Posterior cingulate gyrus (tissue), 11 donors: ENCODE measurements at regions of chr3 and their contacts with region 1.

Region 1: DNA sequence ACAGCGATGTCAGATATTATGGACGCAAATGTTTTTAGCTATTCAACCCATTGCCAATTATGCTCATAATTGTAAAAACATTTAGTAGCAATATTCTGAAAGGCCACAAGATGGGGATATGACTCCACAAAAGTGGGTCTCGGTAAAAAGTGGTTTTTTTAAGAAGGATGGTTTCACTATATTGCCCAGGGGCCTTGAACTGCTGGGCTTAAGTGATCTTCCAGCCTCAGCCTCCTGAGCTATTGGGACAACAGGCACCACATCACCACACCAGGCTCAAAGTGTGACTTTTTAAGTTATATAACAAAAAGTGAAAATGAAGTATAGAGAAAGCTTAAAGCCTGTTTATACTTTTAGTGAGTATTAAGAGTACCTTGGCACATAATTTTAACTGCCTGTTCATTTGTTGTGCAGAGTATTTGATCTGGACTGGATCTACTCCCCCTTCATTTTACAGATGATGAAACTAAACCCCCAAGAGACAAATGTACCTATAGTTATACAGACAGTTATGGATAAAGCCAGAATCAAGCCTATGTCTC is 9.4 kb downstream of the NAA50 start:
- DNase-seq: no peak

Region 2: GRCh38 chr3:113838631-113839209 is 102.1 kb after region 1 on chr3 and contains the start of gene GRAMD1C:
- intact Hi-C with region 1: loop called (anchors 5 kb)
- DNase-seq: peak; percentile 74 to 98 (median 88)

Region 3: GRCh38 chr3:113912552-113913236 is 176.1 kb after region 1 on chr3:
- intact Hi-C with region 1: loop called (anchors 10 kb)
- DNase-seq: no peak

Region 4: GRCh38 chr3:114056130-114057010 is 319.8 kb after region 1 on chr3 and contains the starts of genes CCDC191 and QTRT2:
- intact Hi-C with region 1: loop called (anchors 5 kb)
- DNase-seq: peak; percentile 98 to 100 (median 100)